Panc1 (cell line): ENCODE measurements at regions of chr22 and their contacts with region 1.

Region 1: DNA sequence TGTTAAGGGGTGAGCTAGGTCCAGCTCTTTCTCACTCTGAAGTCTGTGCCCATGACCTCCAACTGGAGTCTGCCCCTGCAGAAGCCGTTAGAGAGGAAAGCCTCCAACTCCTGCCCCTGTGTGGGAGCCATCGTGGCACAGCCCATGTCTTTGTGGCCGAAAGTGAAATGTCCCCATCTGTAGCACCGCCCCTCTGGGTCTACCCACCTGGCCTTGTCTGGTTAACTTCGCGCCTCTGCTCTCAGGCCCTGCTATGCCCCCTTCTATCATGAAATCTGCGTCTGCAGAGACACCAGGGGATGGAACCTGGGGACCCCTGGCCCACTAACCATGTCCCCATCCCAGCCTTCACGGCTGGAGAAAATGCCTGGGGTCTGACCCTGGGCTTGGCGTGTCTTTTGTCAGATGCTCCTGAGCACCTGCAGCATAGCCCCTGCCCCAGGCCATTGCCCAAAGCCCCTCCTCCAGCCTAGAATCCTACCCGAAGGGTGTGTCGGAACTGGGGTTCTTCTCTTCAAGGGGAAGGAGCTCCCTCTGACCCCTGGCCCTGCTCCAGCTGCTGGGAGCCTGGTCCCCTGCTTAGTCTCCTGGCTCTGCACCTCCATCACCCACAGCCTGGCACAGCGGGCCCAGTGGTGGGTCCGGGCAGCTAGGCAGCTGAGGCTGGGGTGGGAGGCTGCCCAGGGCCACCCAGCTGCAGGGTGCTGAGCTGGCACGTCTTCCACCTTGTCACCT is 35.8 kb upstream of the HMOX1 start:
- DNase-seq: no peak
- ATAC-seq: no peak
- H3K4me3 ChIP-seq: no peak overlapping the region
- H3K27ac ChIP-seq: no peak overlapping the region
- H3K4me1 ChIP-seq: peaks cover 5% of the 10 kb centered on the region
- H3K27me3 ChIP-seq: no peaks in the 10 kb centered on the region
- CTCF ChIP-seq: no peak

Region 2: GRCh38 chr22:35330258-35330861 is 14.8 kb before region 1 on chr22:
- CTCF ChIA-PET with region 1: no interaction called
- POLR2A ChIA-PET with region 1: no interaction called
- in situ Hi-C with region 1: no loop called
- intact Hi-C with region 1: no loop called
- DNase-seq: no peak
- ATAC-seq: no peak
- H3K4me3 ChIP-seq: no peak overlapping the region
- H3K27ac ChIP-seq: no peak overlapping the region
- H3K4me1 ChIP-seq: no peaks in the 10 kb centered on the region
- H3K27me3 ChIP-seq: no peaks in the 10 kb centered on the region
- CTCF ChIP-seq: no peak

Region 3: DNA sequence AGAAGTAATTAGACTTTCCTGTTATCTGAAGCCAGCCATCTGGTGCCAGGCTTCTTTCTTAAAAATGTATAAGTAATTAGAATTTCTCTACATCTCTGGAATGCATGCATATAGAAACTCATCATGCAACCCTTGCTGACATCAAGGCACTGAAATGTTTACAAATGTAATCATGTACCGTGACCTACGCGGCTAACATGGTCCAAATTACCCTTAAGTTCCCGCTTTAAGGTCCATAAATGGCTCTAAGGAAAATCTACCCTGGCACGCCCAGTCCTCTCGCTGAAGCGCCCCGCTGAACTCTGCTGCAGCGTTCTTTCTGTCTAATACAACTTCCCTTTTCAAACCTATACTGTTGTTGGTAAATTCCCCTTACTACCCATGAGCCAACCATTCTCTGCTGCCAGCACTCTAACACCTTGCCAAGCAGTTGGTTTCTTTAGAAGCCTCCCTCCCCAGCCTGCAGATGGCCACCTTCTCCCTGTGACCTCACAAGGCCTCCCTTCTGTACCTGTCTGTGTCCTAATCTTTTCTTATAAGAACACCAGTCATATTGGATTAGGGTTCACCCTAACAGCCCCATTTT is 22.3 kb after region 1 on chr22:
- CTCF ChIA-PET with region 1: no interaction called
- POLR2A ChIA-PET with region 1: interaction called, 10 read pairs
- in situ Hi-C with region 1: no loop called
- intact Hi-C with region 1: no loop called
- DNase-seq: no peak
- ATAC-seq: no peak
- H3K4me3 ChIP-seq: no peak overlapping the region
- H3K27ac ChIP-seq: no peak overlapping the region
- H3K4me1 ChIP-seq: peaks cover 3% of the 10 kb centered on the region
- H3K27me3 ChIP-seq: no peaks in the 10 kb centered on the region
- CTCF ChIP-seq: no peak